ENCODE measurements at regions of chr3 and their contacts with region 1.

Region 1: DNA sequence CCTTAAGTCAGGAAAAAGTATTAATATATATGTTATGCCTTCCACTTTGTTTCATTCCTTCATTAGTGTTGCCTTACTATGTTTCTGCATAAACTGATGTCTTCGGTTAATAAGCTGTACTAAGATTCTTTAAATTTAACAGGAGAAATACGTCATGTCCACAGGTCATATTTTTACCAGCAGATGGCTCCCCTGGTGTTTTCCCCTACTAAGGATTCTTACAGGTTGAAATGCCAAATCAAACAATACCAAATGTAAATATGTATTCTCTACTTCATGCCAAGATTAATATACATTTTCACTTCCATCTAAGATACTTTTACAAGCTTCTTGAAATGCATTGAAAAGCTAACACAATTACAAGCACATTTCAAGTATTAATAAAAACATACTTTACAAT is 1602.1 kb downstream of the SI start:
- DNase-seq: peak; percentile 43
- H3K4me3 Mint-ChIP-seq: no peak overlapping the region
- H3K27ac Mint-ChIP-seq: no peak overlapping the region
- H3K4me1 Mint-ChIP-seq: peaks cover 5% of the 10 kb centered on the region
- H3K27me3 Mint-ChIP-seq: no peaks in the 10 kb centered on the region
- CTCF ChIP-seq: no peak

Region 2: GRCh38 chr3:163951397-163951987 is 475.3 kb after region 1 on chr3:
- CTCF ChIA-PET with region 1: interaction called, 3 read pairs
- POLR2A ChIA-PET with region 1: no interaction called
- intact Hi-C with region 1: loop called (anchors 1 kb)
- DNase-seq: peak; percentile 26
- H3K4me3 Mint-ChIP-seq: no peak overlapping the region
- H3K27ac Mint-ChIP-seq: no peak overlapping the region
- H3K4me1 Mint-ChIP-seq: no peaks in the 10 kb centered on the region
- H3K27me3 Mint-ChIP-seq: no peaks in the 10 kb centered on the region
- CTCF ChIP-seq: peak; percentile 44